ENCODE measurements at regions of chr18 and their contacts with region 1.

Region 1: DNA sequence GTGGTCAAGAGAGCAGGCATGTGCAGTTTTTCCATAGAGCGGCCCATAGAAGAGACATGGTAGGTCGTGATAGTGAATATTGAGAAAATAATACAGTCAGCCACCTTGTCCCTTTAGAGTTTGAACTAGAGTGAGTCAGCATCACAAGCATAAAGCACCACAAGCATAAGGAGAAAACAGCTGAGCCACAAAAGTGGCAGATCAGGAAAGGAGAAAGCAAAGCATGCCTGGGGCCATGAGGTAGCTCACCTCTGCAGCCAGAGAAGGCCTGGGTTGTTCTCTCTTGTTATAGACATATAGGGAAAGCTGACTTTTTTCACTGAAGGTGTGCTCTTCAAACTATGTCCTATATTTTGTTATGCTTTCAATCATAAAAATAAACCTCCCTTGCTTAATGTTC is 879.0 kb downstream of the DSC3 start:
- DNase-seq: no peak
- ATAC-seq: no peak
- H3K4me3 ChIP-seq: no peak overlapping the region
- H3K27ac ChIP-seq: no peak overlapping the region
- H3K4me1 ChIP-seq: no peaks in the 10 kb centered on the region
- H3K27me3 ChIP-seq: no peaks in the 10 kb centered on the region
- CTCF ChIP-seq: no peak

Region 2: DNA sequence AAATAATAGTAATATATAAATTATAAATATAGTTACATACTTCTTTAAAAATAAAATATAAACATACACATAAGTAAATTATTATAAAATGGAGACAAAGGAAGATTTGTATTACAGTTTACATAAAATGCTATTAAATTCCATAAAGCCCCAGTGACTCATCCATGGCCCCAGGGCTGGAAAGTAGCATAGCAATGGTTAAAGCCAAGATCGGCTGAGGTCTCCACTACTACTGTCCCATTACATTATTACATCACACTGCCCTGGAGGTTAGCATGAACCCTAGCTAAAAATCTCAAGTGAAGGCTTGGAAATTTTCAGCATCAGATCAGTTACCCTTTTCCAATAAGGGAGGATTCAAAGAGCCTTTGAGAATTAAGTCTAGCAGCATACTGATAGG is 57.2 kb before region 1 on chr18:
- intact Hi-C with region 1: loop called in 1 of 10 experiments (anchors 10 kb)
- DNase-seq: no peak
- ATAC-seq: no peak
- H3K4me3 ChIP-seq: no peak overlapping the region
- H3K27ac ChIP-seq: no peak overlapping the region
- H3K4me1 ChIP-seq: no peaks in the 10 kb centered on the region
- H3K27me3 ChIP-seq: no peaks in the 10 kb centered on the region
- CTCF ChIP-seq: no peak

Region 3: GRCh38 chr18:30121397-30121796 is 42.2 kb before region 1 on chr18:
- intact Hi-C with region 1: no loop called
- DNase-seq: no peak
- ATAC-seq: no peak
- H3K4me3 ChIP-seq: no peak overlapping the region
- H3K27ac ChIP-seq: no peak overlapping the region
- H3K4me1 ChIP-seq: no peaks in the 10 kb centered on the region
- H3K27me3 ChIP-seq: no peaks in the 10 kb centered on the region
- CTCF ChIP-seq: no peak

Region 4: DNA sequence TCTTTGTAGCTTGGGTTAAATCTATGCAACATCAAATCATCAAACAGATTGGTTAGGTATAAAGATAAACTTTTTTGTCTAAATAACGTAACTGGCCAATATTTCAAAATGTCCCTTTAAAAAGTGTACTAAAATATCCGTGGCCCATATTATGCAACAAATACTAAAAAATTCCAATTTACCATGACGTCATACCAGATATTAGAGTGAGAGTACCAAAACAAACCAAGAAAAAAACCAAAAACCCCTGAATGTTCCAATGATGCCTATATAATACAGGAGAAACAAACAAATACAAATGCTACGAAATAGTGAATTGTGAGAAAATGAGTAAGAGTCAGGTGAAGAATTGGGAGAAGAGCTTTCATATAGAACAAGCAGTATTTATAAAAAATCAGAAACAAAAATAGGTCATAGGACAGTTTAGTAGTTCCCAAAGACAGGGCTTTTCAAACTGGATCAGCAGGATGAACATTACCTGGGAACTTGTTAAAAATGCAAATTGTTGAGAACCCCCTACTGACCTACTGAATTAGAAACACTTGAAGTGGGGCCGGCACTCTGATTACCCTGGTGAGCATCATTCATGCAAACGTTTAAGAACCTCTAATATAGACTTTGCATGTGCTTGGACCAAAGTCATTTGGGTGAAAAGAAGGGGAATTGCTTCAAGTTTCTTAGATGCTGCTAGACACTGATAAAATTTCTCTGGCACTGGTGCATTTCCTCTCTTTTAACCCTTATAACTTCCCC is 125.3 kb after region 1 on chr18:
- intact Hi-C with region 1: no loop called
- DNase-seq: no peak
- ATAC-seq: no peak
- H3K4me3 ChIP-seq: no peak overlapping the region
- H3K27ac ChIP-seq: no peak overlapping the region
- H3K4me1 ChIP-seq: no peaks in the 10 kb centered on the region
- H3K27me3 ChIP-seq: no peaks in the 10 kb centered on the region
- CTCF ChIP-seq: no peak